Right ventricle myocardium inferior (tissue), 1 donor: ENCODE measurements at regions of chr4 and their contacts with region 1.

Region 1: DNA sequence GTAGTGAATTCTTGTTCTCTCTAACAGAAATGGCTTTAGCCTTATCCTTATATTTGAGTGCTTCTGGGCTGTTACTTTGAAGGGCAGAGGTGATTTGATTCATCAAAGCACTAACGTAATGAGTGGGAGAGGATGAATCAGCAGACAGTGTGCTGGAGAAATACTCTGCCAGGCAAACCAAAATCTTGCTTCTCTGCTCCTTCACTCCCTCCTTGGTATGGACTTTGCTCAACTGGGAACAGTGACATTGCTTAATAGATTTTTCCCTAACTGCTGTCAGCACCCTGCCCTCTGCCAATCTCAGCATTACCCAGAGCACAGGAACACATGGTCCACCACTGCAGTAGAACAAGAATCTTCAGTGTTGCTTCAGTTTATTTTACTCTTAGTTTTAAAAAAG is 56.0 kb downstream of the PDLIM5 start:
- DNase-seq: no peak
- ATAC-seq: peak; percentile 93

Region 2: DNA sequence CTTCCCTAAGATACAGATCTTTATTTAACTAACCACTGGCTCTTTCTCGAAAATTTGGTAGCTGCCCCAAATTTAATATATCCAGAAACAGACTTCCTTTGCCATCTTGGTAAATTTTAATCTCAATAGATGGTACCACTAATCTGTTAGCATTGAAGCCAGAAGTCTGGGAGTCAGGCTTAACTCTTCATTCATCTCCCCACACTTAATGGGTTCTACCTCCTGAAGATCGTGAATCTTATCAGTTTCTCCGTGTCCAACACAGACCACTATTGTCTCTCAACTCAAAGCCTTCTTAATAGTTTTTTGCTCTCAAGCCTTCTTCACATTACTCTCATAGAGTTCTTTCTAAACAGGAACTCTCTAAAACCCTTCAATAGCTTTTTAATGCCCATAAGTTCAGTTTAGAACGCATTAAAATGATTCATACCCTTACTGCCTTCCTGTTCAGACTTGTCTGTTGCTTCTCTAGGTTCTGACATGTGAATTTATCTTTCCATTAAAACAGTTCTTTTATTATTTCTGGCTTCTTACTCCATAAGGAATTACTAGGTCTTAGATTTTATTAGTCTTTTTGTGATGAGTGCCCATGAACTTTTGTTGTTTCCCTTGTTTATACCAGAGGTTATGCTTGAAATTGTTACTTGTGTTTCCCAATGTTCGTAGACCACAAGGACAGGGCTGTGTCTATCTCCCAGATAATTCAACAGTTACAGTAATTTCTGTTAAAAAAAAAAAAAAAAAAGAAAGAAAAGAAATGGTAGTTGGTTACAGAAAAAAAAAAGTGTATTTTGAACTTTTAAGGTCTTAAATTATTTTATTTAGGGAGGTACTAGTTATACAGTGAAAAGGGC is 245.3 kb before region 1 on chr4:
- intact Hi-C with region 1: no loop called
- DNase-seq: no peak
- ATAC-seq: no peak

Region 3: DNA sequence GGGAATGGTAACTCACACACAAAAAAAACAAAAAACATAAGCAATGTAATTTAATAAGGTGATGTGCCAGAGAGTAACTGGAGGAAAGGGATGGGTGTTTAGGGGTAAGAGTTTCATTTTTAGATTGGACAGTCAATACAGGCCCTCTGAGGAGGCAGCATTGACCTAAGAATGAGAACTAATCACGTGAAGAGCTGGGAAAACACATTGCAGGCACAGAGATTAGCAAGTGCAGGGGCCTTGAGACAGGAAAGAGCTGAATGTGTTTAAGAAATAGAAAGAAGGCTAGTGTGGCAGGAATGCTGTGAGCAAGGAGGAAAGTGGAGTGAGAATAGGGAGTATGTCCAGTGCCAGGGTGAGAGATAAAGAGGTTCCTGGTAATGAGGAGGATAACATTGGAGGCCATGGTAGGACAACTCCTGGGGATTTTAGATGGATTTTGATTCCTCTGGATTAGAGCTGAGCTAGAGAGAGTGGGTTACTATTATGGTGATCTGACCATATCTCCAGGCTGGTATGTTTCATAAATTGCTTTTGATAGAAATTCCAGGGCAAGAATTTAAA is 38.4 kb before region 1 on chr4:
- intact Hi-C with region 1: loop called (anchors 5 kb)
- DNase-seq: no peak
- ATAC-seq: no peak

Region 4: DNA sequence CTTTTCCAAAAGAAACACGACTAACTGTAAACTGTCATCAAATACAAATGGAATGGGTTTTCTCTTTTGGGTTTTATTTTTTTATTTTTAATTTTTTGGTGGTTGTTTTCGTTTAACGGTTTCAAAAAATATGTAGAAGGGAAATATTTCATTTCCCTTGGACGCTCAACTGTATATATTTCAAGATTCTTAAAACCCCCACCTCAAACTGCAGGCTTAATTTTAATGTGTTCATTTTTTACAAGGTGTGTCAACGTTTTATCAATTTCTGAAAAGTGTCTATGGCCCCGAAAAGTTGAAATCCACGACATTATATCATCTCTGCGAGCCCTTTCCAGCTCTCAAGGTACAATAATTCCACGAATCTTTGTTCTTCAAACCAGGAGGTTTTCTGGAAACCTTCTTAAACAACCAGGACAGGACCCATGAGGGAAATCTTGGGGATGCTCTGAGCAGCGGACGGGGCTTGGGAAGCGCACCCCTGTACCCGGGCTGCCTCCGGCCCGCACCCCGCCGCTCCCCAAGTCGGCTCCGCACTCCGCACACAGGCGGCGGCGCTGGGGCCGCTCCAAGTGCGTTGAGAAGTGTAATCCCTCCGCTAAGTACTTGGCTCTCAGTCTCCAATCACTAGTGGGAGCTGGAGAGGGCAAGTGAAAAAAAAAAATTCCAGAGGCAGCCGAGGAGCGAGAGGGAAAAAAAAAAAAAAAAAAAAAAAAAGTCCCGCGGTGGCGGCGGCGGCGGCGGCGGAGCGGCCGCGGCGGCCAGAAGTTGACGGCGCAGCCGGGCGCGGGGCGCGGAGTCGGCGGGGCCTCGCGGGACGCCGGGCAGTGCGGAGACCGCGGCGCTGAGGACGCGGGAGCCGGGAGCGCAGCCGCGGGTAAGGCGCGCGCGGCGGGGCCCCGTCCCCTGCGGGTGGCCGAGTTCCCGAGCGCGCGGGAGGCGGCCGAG is 249.8 kb after region 1 on chr4 and contains the start of gene BMPR1B:
- intact Hi-C with region 1: no loop called
- DNase-seq: no peak
- ATAC-seq: peak; percentile 31
- total RNA-seq, gene BMPR1B: 1.4 TPM